Naive thymus-derived CD4-positive, alpha-beta T cell (primary cell): ENCODE measurements at regions of chr1 and their contacts with region 1.

Region 1: GRCh38 chr1:93345633-93346420 is at the start of gene DR1:
- DNase-seq: peak; percentile 82 to 96 (median 91)
- ATAC-seq: peak; percentile 91
- H3K4me3 ChIP-seq: peak within 1 kb of the TSS; percentile 93
- H3K4me3 Mint-ChIP-seq: peak within 1 kb of the TSS; percentile 92 to 100 (median 99)
- H3K27ac ChIP-seq: peak within 1 kb of the TSS; percentile 88
- H3K27ac Mint-ChIP-seq: peak within 1 kb of the TSS; percentile 89 to 99 (median 98)
- H3K4me1 ChIP-seq: peaks cover 13 to 25% of the 10 kb centered on the region in 2 donors
- H3K4me1 Mint-ChIP-seq: peaks cover 19 to 47% (median 35%) of the 10 kb centered on the region in 7 donors
- H3K27me3 ChIP-seq: no peaks in the 10 kb centered on the region
- H3K27me3 Mint-ChIP-seq: no peaks in the 10 kb centered on the region
- total RNA-seq, gene DR1: 46.2 to 104 (median 62.7) TPM

Region 2: GRCh38 chr1:92960395-92961130 is 385.3 kb before region 1 on chr1:
- CTCF ChIA-PET with region 1: no interaction called
- POLR2A ChIA-PET with region 1: no interaction called
- intact Hi-C with region 1: loop called (anchors 2 to 5 kb)
- DNase-seq: peak in 8 of 9 donors; percentile 57 to 85 (median 76)
- ATAC-seq: peak; percentile 65
- H3K4me3 ChIP-seq: peak overlapping the region; percentile 58
- H3K4me3 Mint-ChIP-seq: peak overlapping the region in 9 of 10 donors; percentile 86 to 97 (median 90)
- H3K27ac ChIP-seq: peak overlapping the region; percentile 100
- H3K27ac Mint-ChIP-seq: peak overlapping the region; percentile 95 to 99 (median 98)
- H3K4me1 ChIP-seq: peaks cover 39 to 55% of the 10 kb centered on the region in 2 donors
- H3K4me1 Mint-ChIP-seq: peaks cover 37 to 46% (median 41%) of the 10 kb centered on the region in 7 donors
- H3K27me3 ChIP-seq: no peaks in the 10 kb centered on the region
- H3K27me3 Mint-ChIP-seq: no peaks in the 10 kb centered on the region

Region 3: GRCh38 chr1:93219443-93219842 is 126.4 kb before region 1 on chr1:
- CTCF ChIA-PET with region 1: no interaction called
- POLR2A ChIA-PET with region 1: no interaction called
- intact Hi-C with region 1: loop called in 1 of 2 experiments (anchors 2 kb)
- DNase-seq: peak in 7 of 9 donors; percentile 3 to 28 (median 19)
- ATAC-seq: peak; percentile 34
- H3K4me3 ChIP-seq: peak overlapping the region; percentile 64
- H3K4me3 Mint-ChIP-seq: peak overlapping the region; percentile 35 to 86 (median 79)
- H3K27ac ChIP-seq: peak overlapping the region; percentile 55
- H3K27ac Mint-ChIP-seq: peak overlapping the region; percentile 37 to 90 (median 69)
- H3K4me1 ChIP-seq: peaks cover 4 to 6% of the 10 kb centered on the region in 2 donors
- H3K4me1 Mint-ChIP-seq: peaks cover 6 to 23% (median 19%) of the 10 kb centered on the region in 7 donors
- H3K27me3 ChIP-seq: no peaks in the 10 kb centered on the region
- H3K27me3 Mint-ChIP-seq: no peaks in the 10 kb centered on the region

Region 4: DNA sequence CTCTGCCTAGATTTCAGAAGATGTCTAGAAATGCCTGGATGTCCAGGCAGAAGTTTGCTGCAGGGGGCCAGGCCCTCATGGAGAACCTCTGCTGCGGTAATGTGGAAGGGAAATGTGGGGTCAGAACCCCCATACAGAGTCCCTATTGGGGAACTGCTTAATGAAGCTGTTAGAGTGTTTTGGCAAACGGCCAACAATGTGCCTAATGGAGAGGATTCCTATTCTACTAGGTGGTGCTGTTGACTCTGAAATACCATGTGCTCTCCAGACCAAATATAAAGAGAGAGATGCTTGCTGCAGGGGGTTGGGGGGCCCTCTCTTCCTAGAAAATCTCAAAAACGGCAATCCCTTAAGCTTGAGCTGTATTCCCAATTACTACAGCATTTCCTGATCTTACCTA is 57.3 kb before region 1 on chr1:
- CTCF ChIA-PET with region 1: no interaction called
- POLR2A ChIA-PET with region 1: no interaction called
- intact Hi-C with region 1: no loop called
- DNase-seq: no peak
- ATAC-seq: no peak
- H3K4me3 ChIP-seq: no peak overlapping the region
- H3K4me3 Mint-ChIP-seq: no peak overlapping the region
- H3K27ac ChIP-seq: no peak overlapping the region
- H3K27ac Mint-ChIP-seq: no peak overlapping the region
- H3K4me1 ChIP-seq: no peaks in the 10 kb centered on the region
- H3K4me1 Mint-ChIP-seq: peaks cover 0 to 5% (median 0%) of the 10 kb centered on the region in 7 donors
- H3K27me3 ChIP-seq: no peaks in the 10 kb centered on the region
- H3K27me3 Mint-ChIP-seq: no peaks in the 10 kb centered on the region

Region 5: DNA sequence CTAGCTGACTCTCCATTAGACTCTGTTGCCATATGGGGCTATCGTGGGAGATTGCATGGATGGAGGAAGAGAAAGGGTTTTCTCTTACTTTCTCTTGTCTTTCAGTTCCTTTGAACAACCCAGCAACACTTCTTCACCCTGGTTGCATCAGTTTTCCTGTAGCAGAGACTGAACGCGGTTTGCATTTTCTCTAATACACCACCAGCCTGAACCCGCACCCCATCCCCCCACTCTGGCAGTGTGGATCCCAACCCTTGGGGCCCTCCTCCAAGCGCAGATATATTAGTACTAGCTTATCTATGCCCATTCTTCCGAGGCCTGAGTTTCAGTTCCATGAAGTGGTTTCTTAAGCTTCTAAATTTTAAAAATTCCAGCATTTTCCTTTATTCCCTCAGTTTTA is 12.5 kb after region 1 on chr1:
- CTCF ChIA-PET with region 1: no interaction called
- POLR2A ChIA-PET with region 1: interaction called, 7 read pairs
- intact Hi-C with region 1: loop called in 1 of 2 experiments (anchors 1 kb)
- DNase-seq: no peak
- ATAC-seq: no peak
- H3K4me3 ChIP-seq: no peak overlapping the region
- H3K4me3 Mint-ChIP-seq: peak overlapping the region in 4 of 10 donors; percentile 0 to 42 (median 33)
- H3K27ac ChIP-seq: no peak overlapping the region
- H3K27ac Mint-ChIP-seq: peak overlapping the region in 8 of 9 donors; percentile 2 to 72 (median 50)
- H3K4me1 ChIP-seq: peaks cover 14 to 29% of the 10 kb centered on the region in 2 donors
- H3K4me1 Mint-ChIP-seq: peaks cover 37 to 85% (median 76%) of the 10 kb centered on the region in 7 donors
- H3K27me3 ChIP-seq: no peaks in the 10 kb centered on the region
- H3K27me3 Mint-ChIP-seq: no peaks in the 10 kb centered on the region

Region 6: GRCh38 chr1:93878889-93879586 is 533.2 kb after region 1 on chr1 and contains the start of gene DNTTIP2:
- CTCF ChIA-PET with region 1: no interaction called
- POLR2A ChIA-PET with region 1: no interaction called
- intact Hi-C with region 1: loop called (anchors 1 to 10 kb)
- DNase-seq: peak; percentile 73 to 89 (median 86)
- ATAC-seq: peak; percentile 90
- H3K4me3 ChIP-seq: peak within 1 kb of the TSS; percentile 83
- H3K4me3 Mint-ChIP-seq: peak within 1 kb of the TSS; percentile 92 to 99 (median 97)
- H3K27ac ChIP-seq: peak within 1 kb of the TSS; percentile 94
- H3K27ac Mint-ChIP-seq: peak within 1 kb of the TSS; percentile 96 to 99 (median 98)
- H3K4me1 ChIP-seq: peaks cover 21 to 25% of the 10 kb centered on the region in 2 donors
- H3K4me1 Mint-ChIP-seq: peaks cover 34 to 62% (median 54%) of the 10 kb centered on the region in 7 donors
- H3K27me3 ChIP-seq: no peaks in the 10 kb centered on the region
- H3K27me3 Mint-ChIP-seq: no peaks in the 10 kb centered on the region
- total RNA-seq, gene DNTTIP2: 51.8 to 84.2 (median 77.5) TPM

Region 7: DNA sequence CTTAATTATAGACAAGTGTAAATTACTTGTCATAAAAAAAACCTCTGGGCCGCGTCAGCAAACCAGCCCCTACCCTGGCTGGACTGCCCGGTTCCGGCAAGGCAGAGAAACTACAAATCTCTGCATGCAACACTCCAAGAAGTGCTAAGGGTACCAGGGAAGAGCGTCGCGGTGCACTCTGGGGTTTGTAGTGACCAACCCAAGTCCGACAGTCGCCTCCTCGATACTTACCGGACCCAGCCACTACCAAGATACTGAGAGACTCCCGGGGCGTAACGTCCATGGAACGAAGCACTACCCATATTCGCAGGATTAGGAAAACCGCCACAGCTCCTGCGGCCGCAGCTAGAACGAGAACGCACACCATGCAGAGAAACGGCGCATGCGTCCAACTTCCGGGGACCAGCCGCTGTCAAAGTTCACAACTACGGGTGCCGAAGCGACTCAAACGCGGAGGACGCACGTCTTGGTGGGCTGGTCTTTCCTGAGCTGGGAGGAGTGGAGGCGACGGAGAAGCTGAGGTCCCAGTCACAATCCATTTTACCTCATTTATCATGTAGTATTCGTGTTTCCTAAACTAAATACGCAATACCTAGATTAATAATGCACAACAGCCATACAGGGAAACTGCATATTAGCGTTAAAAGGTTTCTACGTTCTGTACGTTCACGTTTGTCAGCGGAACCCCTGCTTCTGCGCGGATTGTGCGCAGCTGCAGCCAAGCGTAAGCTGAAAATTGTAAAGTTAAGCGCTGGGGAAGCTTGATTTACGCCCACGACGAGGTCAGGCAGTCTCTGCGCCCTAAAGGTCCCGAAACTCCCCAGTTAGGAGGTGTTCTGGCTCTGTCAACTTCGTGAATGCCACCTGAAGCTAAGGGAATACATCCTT is 1726.9 kb after region 1 on chr1 and contains the start of gene ALG14:
- CTCF ChIA-PET with region 1: no interaction called
- POLR2A ChIA-PET with region 1: no interaction called
- intact Hi-C with region 1: loop called in 1 of 2 experiments (anchors 10 kb)
- DNase-seq: peak; percentile 81 to 96 (median 95)
- ATAC-seq: peak; percentile 96
- H3K4me3 ChIP-seq: peak within 1 kb of the TSS; percentile 96
- H3K4me3 Mint-ChIP-seq: peak within 1 kb of the TSS; percentile 88 to 100 (median 98)
- H3K27ac ChIP-seq: peak within 1 kb of the TSS; percentile 85
- H3K27ac Mint-ChIP-seq: peak within 1 kb of the TSS; percentile 95 to 100 (median 97)
- H3K4me1 ChIP-seq: peaks cover 8 to 12% of the 10 kb centered on the region in 2 donors
- H3K4me1 Mint-ChIP-seq: peaks cover 10 to 26% (median 18%) of the 10 kb centered on the region in 7 donors
- H3K27me3 ChIP-seq: no peaks in the 10 kb centered on the region
- H3K27me3 Mint-ChIP-seq: peaks cover 0 to 6% (median 0%) of the 10 kb centered on the region in 5 donors
- total RNA-seq, gene ALG14: 1.1 to 2.2 (median 1.5) TPM